ENCODE measurements at regions of chr1 and their contacts with region 1.

Region 1: DNA sequence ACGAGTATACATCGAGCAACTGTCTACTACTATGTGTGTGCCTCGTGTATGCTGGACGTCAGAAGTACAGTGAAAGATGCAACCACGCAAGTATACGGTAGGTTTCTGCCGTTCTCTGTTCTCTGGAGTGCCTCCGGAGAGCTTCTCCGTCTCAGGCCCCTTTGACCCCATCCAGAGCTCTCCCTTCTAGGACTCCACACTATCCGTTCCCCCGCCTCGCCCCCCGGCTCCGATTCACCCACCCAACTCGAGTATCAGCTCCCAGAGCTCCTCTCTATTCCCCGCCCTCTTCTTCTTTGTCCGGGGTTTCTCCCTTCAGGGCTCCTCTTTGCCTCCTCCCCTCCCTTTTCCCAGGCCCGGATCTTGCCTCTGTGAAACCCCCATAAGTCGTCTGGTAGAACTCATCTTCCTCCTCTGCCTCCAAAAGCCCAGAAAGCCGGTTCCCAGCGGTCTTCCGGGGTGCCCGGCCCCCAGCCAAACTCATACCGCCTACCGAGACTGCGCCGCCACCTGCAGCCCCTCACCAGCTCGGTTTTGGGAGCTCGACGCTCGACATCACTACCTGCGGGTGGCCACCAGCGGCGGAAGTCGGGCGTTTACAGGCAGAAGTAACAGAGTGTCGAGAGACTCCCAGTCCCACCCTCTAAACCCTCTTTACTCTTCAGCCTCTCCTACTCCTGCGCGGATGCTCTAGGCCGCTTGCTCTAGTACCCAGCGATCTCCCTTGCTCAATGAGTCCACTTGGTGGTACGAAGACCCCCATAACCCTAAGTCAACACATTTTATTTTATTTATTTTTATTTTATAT is at the start of gene VPS72:
- DNase-seq: peak; percentile 91
- H3K4me3 ChIP-seq: peak within 1 kb of the TSS; percentile 63 to 97 (median 93)
- H3K27ac ChIP-seq: peak within 1 kb of the TSS; percentile 56
- H3K4me1 ChIP-seq: peaks cover 10% of the 10 kb centered on the region
- H3K27me3 ChIP-seq: no peaks in the 10 kb centered on the region
- CTCF ChIP-seq: no peak
- POLR2A ChIP-seq: peak; percentile 92
- total RNA-seq, gene VPS72: 83.1 and 85.2 TPM in 2 replicates

Region 2: GRCh38 chr1:151008190-151008860 is 181.5 kb before region 1 on chr1 and contains the start of gene PRUNE1:
- CTCF ChIA-PET with region 1: no interaction called
- POLR2A ChIA-PET with region 1: no interaction called
- dilution Hi-C with region 1: no loop called
- intact Hi-C with region 1: no loop called
- DNase-seq: peak; percentile 98
- H3K4me3 ChIP-seq: peak within 1 kb of the TSS; percentile 7 to 82 (median 52)
- H3K27ac ChIP-seq: peak within 1 kb of the TSS; percentile 88
- H3K4me1 ChIP-seq: peaks cover 28% of the 10 kb centered on the region
- H3K27me3 ChIP-seq: no peaks in the 10 kb centered on the region
- CTCF ChIP-seq: no peak
- POLR2A ChIP-seq: no peak
- total RNA-seq, gene PRUNE1: 8.0 and 8.6 TPM in 2 replicates

Region 3: GRCh38 chr1:151165738-151166505 is 23.9 kb before region 1 on chr1 and contains the starts of genes LYSMD1 and SCNM1:
- CTCF ChIA-PET with region 1: interaction called, 4 read pairs
- POLR2A ChIA-PET with region 1: no interaction called
- dilution Hi-C with region 1: no loop called
- intact Hi-C with region 1: loop called (anchors 1 kb)
- DNase-seq: peak; percentile 98
- H3K4me3 ChIP-seq: peak within 1 kb of the TSS; percentile 65 to 89 (median 81)
- H3K27ac ChIP-seq: peak within 1 kb of the TSS; percentile 65
- H3K4me1 ChIP-seq: peaks cover 19% of the 10 kb centered on the region
- H3K27me3 ChIP-seq: no peaks in the 10 kb centered on the region
- CTCF ChIP-seq: no peak
- POLR2A ChIP-seq: peak; percentile 69
- total RNA-seq, gene LYSMD1: 6.4 and 8.2 TPM in 2 replicates
- total RNA-seq, gene SCNM1: 43.1 and 49.0 TPM in 2 replicates

Measured in endothelial cell of umbilical vein (primary cell).